Transverse colon (tissue), 4 donors: ENCODE measurements at regions of chr9 and their contacts with region 1.

Region 1: DNA sequence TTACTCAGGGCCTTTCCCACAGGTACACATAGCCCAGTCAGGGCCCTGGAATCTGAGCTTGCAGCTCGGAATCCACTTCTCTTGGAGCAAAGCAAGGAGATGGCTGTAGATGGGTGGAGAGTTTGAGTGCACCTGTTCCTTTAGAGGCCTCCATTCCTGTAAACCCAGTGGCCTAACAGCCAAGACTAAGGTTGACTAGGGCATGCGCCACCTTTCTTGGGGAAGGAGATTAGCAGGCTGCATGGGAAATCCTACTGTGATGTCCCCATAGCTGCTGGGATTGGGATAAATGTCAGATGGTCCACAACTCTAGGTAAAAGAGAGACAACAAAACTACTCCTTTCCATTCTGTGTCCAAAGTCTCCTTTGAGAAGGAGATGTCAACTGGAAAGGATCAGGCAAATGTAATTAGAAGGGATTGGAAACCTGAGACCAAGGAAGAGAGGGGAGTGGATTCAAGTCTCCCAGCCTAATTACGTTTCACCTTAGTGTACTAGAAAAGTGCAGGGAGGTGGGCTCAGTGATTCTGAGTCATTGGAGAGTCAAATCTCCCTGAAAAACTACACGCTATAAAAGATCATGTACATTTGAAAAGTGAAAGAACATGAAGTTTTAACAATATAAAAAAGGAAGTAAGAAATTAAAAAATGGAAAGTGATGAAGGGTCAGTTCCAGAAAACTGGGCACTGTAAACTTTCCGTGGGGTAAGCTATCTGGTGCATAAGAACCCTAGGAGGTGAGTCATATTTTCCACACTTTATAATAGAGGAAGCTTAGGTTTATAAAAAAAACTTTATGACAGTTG is 104.2 kb downstream of the SEC61B start:
- DNase-seq: no peak
- H3K4me3 ChIP-seq: no peak overlapping the region
- H3K27ac ChIP-seq: no peak overlapping the region
- H3K4me1 ChIP-seq: no peaks in the 10 kb centered on the region
- H3K27me3 ChIP-seq: no peaks in the 10 kb centered on the region
- CTCF ChIP-seq: no peak
- EP300 ChIP-seq: no peak
- POLR2A ChIP-seq: no peak

Region 2: GRCh38 chr9:99433555-99433954 is 107.2 kb after region 1 on chr9:
- in situ Hi-C with region 1: loop called in 1 of 4 experiments (anchors 25 kb)
- intact Hi-C with region 1: no loop called
- DNase-seq: peak; percentile 9
- H3K4me3 ChIP-seq: no peak overlapping the region
- H3K27ac ChIP-seq: no peak overlapping the region
- H3K4me1 ChIP-seq: no peaks in the 10 kb centered on the region
- H3K27me3 ChIP-seq: no peaks in the 10 kb centered on the region
- CTCF ChIP-seq: no peak
- EP300 ChIP-seq: no peak
- POLR2A ChIP-seq: no peak